ENCODE measurements at regions of chr20 and their contacts with region 1.

Region 1: GRCh38 chr20:266596-267562 is 9.4 kb downstream of the DEFB132 start:
- DNase-seq: peak; percentile 76
- H3K4me3 ChIP-seq: peak overlapping the region in 2 of 3 experiments; percentile 31 to 50
- H3K27ac ChIP-seq: no peak overlapping the region
- H3K4me1 ChIP-seq: peaks cover 3% of the 10 kb centered on the region
- H3K27me3 ChIP-seq: peaks cover 0 to 2% of the 10 kb centered on the region in 2 experiments
- CTCF ChIP-seq: peak; percentile 97 to 98
- POLR2A ChIP-seq: peak; percentile 53

Region 2: DNA sequence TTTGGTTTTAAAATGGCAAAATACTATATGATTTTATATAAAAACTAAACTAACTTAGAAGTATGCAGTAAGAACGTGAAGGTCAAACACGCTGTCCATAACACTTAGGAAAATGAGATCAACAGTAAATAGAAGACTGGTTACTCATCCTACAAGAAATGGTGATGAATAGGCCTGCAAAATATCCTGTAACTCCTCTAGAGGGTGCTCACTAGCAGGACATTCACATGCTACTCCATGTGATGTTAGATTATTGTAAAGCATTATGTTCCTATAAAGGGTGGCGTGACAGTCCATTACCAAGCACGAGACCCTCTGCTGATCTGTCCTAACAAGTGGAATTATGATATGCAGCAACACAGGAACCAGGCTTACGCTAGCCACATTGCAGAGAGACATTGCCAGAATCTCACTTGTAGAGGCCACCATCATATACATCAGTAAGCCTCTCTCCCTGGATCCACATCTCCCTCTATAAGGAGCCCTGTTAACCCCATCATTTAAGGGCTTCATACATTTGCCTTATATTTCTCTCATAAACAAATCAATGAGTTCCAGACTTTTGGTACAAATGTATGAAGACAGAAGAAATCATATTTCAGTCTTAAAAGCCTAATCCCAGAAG is 57.8 kb before region 1 on chr20:
- CTCF ChIA-PET with region 1: interaction called, 8 read pairs
- POLR2A ChIA-PET with region 1: no interaction called
- dilution Hi-C with region 1: no loop called
- intact Hi-C with region 1: loop called (anchors 1 kb)
- DNase-seq: peak; percentile 66
- H3K4me3 ChIP-seq: no peak overlapping the region
- H3K27ac ChIP-seq: no peak overlapping the region
- H3K4me1 ChIP-seq: no peaks in the 10 kb centered on the region
- H3K27me3 ChIP-seq: peaks cover 11 to 22% of the 10 kb centered on the region in 2 experiments
- CTCF ChIP-seq: peak; percentile 31 to 50
- POLR2A ChIP-seq: no peak

Region 3: GRCh38 chr20:290084-290831 is 23.4 kb after region 1 on chr20 and contains the start of gene C20orf96:
- CTCF ChIA-PET with region 1: interaction called, 5 read pairs
- POLR2A ChIA-PET with region 1: no interaction called
- dilution Hi-C with region 1: no loop called
- intact Hi-C with region 1: loop called (anchors 1 kb)
- DNase-seq: peak; percentile 94
- H3K4me3 ChIP-seq: peak within 1 kb of the TSS; percentile 82 to 98 (median 87)
- H3K27ac ChIP-seq: peak within 1 kb of the TSS; percentile 54
- H3K4me1 ChIP-seq: peaks cover 27% of the 10 kb centered on the region
- H3K27me3 ChIP-seq: no peaks in the 10 kb centered on the region
- CTCF ChIP-seq: peak; percentile 22 to 62
- POLR2A ChIP-seq: peak; percentile 70
- total RNA-seq, gene C20orf96: 17.0 and 20.0 TPM in 2 replicates

Region 4: DNA sequence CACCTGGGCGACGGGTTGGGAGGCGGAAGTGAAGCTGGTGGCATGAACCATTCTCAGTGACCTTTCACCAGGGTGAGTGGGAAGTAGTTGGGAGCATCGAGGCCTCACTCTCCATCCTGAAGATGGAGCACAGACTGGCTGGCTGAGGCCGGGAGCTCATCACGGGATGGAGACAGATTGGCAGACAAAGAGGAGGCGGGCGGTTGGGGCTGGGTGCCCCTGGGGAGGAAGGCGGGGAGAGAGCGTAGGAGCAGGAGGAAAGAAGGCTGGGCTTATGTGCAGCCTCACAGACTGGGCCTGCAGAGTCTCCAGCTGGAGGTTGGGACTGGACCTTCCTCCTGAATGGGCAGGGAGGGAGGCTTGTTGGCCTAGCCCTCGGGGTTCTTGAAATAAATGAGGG is 452.9 kb after region 1 on chr20:
- CTCF ChIA-PET with region 1: no interaction called
- POLR2A ChIA-PET with region 1: no interaction called
- dilution Hi-C with region 1: no loop called
- intact Hi-C with region 1: no loop called
- DNase-seq: no peak
- H3K4me3 ChIP-seq: no peak overlapping the region
- H3K27ac ChIP-seq: no peak overlapping the region
- H3K4me1 ChIP-seq: no peaks in the 10 kb centered on the region
- H3K27me3 ChIP-seq: peaks cover 2 to 4% of the 10 kb centered on the region in 2 experiments
- CTCF ChIP-seq: no peak
- POLR2A ChIP-seq: no peak